H1 (cell line): ENCODE measurements at regions of chr22 and their contacts with region 1.

Region 1: GRCh38 chr22:35622191-35622913 is 5.2 kb upstream of the MB start:
- DNase-seq: peak in 1 of 2 experiments; percentile 56
- H3K4me3 ChIP-seq: no peak overlapping the region
- H3K27ac ChIP-seq: no peak overlapping the region
- H3K4me1 ChIP-seq: peaks cover 0 to 18% (median 11%) of the 10 kb centered on the region in 4 experiments; a peak in 5 of 7 replicates
- H3K27me3 ChIP-seq: no peaks in the 10 kb centered on the region; a peak in 1 of 7 replicates
- CTCF ChIP-seq: no peak
- EP300 ChIP-seq: no peak
- POLR2A ChIP-seq: no peak
- RAD21 ChIP-seq: no peak

Region 2: DNA sequence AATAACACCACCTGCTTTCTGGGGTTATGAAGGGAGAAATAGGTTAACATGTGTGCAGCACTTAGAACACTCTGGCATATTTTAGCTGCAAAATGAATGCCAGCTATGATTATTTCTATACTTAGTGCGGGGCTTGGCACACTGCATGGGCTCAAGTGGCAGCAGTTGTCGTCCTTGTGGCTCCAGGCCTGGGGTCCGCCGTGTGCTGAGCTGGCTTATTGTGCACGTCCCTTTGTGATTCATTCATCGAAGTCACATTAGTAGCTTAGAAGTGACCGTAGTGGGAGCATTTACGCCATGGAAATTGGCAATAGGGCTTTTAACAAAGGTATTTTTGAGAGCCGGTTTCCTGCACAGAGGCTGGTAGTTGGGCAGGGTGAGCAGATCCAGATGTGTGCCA is 77.5 kb before region 1 on chr22:
- CTCF ChIA-PET with region 1: no interaction called
- POLR2A ChIA-PET with region 1: no interaction called
- DNase-seq: no peak
- H3K4me3 ChIP-seq: no peak overlapping the region
- H3K27ac ChIP-seq: no peak overlapping the region
- H3K4me1 ChIP-seq: peaks cover 4 to 43% (median 21%) of the 10 kb centered on the region in 4 experiments
- H3K27me3 ChIP-seq: peaks cover 0 to 21% (median 13%) of the 10 kb centered on the region in 4 experiments; a peak in 5 of 7 replicates
- CTCF ChIP-seq: no peak
- EP300 ChIP-seq: no peak
- POLR2A ChIP-seq: no peak
- RAD21 ChIP-seq: no peak

Region 3: GRCh38 chr22:35600476-35600875 is 21.9 kb before region 1 on chr22:
- CTCF ChIA-PET with region 1: interaction called, 11 read pairs
- POLR2A ChIA-PET with region 1: no interaction called
- DNase-seq: no peak
- H3K4me3 ChIP-seq: no peak overlapping the region
- H3K27ac ChIP-seq: no peak overlapping the region
- H3K4me1 ChIP-seq: no peaks in the 10 kb centered on the region
- H3K27me3 ChIP-seq: no peaks in the 10 kb centered on the region
- CTCF ChIP-seq: no peak
- EP300 ChIP-seq: no peak
- POLR2A ChIP-seq: no peak
- RAD21 ChIP-seq: no peak

Region 4: GRCh38 chr22:35708453-35708852 is 86.1 kb after region 1 on chr22:
- CTCF ChIA-PET with region 1: no interaction called
- POLR2A ChIA-PET with region 1: no interaction called
- DNase-seq: no peak
- H3K4me3 ChIP-seq: no peak overlapping the region
- H3K27ac ChIP-seq: no peak overlapping the region
- H3K4me1 ChIP-seq: no peaks in the 10 kb centered on the region
- H3K27me3 ChIP-seq: no peaks in the 10 kb centered on the region
- CTCF ChIP-seq: no peak
- EP300 ChIP-seq: no peak
- POLR2A ChIP-seq: no peak
- RAD21 ChIP-seq: no peak